ENCODE measurements at regions of chr1 and their contacts with region 1.

Region 1: GRCh38 chr1:226424228-226425003 is 16.5 kb upstream of the PARP1 start:
- DNase-seq: peak; percentile 28
- ATAC-seq: peak; percentile 66
- H3K4me3 Mint-ChIP-seq: no peak overlapping the region
- H3K27ac Mint-ChIP-seq: no peak overlapping the region
- H3K4me1 Mint-ChIP-seq: peaks cover 22% of the 10 kb centered on the region
- H3K27me3 Mint-ChIP-seq: no peaks in the 10 kb centered on the region

Region 2: GRCh38 chr1:225026701-225027100 is 1397.7 kb before region 1 on chr1:
- CTCF ChIA-PET with region 1: no interaction called
- POLR2A ChIA-PET with region 1: no interaction called
- intact Hi-C with region 1: no loop called
- DNase-seq: no peak
- ATAC-seq: no peak
- H3K4me3 Mint-ChIP-seq: no peak overlapping the region
- H3K27ac Mint-ChIP-seq: no peak overlapping the region
- H3K4me1 Mint-ChIP-seq: no peaks in the 10 kb centered on the region
- H3K27me3 Mint-ChIP-seq: no peaks in the 10 kb centered on the region

Region 3: DNA sequence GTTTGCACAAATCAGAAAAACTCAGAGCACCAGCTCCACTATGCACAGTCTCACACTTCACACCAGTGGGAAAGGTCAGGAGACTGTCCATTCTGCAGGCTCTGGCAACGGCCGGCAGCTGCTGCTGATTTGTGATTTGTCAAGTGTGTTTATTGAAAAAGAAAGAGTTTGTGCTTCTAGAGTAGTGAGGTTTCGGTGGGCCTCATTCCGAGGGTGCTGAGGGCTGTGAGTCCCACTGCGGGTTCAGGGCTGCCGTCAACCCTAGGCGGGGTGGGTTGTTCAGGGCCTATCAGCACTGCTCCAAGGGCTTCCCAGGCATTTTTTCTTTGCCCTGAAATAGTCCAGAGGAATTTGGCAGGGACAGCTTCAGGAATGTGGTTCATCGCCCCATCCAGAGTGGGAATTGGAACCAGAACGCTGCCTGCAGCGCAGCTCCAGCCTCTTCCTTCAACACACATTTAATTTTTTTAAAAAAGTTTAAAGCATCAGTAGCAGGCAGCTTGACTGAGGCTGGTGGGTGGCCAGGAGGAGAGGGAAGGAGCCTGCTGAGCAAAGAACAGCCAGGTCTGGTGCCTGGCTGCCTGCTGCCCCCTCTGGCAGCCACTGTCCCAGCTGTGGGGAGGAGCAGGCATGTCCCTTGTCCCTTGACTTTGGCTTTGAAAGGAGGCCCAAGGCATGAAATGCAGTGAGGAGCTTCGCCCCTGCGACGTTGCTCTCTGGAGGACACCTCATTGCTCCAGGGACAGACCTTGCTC is 143.8 kb after region 1 on chr1:
- CTCF ChIA-PET with region 1: no interaction called
- POLR2A ChIA-PET with region 1: no interaction called
- intact Hi-C with region 1: no loop called
- DNase-seq: peak; percentile 12
- ATAC-seq: no peak
- H3K4me3 Mint-ChIP-seq: no peak overlapping the region
- H3K27ac Mint-ChIP-seq: no peak overlapping the region
- H3K4me1 Mint-ChIP-seq: no peaks in the 10 kb centered on the region
- H3K27me3 Mint-ChIP-seq: peaks cover 2% of the 10 kb centered on the region

Region 4: DNA sequence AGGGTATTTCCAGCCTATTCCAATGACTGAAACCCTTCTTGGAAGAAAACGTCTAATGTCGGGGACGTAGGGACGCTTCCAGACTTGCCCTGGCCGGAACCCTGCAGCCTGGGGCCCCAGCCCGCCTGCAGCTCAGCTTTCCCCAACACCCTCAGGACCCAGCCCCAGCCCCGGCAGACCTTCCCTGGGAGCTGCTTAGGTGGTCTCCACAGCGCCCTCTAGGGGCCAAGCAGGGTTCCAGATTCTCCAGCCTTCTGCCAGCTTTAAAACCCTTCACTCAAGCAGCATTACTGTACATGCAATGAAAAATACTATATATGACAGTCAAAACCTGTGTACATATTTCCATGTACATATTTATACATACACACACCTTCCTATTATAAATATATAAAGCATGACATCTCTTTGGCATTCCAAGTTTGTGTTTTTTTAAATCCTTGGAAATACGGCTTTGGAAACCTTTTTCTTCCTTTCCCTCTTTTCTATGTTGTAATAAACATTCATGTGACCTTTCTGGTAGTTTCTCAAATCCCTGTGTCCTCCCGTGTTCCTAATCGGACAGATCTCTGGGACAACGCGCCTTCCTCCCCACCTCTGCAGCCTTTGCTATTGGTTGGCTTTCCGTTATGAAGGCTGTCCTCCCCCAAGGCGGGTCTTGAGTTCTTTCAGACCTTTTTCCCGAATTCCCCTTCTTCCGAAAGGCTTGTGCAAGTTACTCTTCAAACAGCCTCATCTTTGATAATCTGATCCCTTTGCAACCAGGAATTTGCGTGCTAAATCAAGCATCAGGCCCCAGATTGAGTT is 184.5 kb after region 1 on chr1:
- CTCF ChIA-PET with region 1: interaction called, 3 read pairs
- POLR2A ChIA-PET with region 1: no interaction called
- intact Hi-C with region 1: loop called (anchors 1 to 5 kb)
- DNase-seq: peak; percentile 85
- ATAC-seq: peak; percentile 89
- H3K4me3 Mint-ChIP-seq: no peak overlapping the region
- H3K27ac Mint-ChIP-seq: no peak overlapping the region
- H3K4me1 Mint-ChIP-seq: no peaks in the 10 kb centered on the region
- H3K27me3 Mint-ChIP-seq: no peaks in the 10 kb centered on the region

Measured in activated CD4-positive, alpha-beta T cell treated with anti-CD3 and anti-CD28 coated beads for 36 hours (primary cell).